ENCODE measurements at regions of chr4 and their contacts with region 1.

Region 1: DNA sequence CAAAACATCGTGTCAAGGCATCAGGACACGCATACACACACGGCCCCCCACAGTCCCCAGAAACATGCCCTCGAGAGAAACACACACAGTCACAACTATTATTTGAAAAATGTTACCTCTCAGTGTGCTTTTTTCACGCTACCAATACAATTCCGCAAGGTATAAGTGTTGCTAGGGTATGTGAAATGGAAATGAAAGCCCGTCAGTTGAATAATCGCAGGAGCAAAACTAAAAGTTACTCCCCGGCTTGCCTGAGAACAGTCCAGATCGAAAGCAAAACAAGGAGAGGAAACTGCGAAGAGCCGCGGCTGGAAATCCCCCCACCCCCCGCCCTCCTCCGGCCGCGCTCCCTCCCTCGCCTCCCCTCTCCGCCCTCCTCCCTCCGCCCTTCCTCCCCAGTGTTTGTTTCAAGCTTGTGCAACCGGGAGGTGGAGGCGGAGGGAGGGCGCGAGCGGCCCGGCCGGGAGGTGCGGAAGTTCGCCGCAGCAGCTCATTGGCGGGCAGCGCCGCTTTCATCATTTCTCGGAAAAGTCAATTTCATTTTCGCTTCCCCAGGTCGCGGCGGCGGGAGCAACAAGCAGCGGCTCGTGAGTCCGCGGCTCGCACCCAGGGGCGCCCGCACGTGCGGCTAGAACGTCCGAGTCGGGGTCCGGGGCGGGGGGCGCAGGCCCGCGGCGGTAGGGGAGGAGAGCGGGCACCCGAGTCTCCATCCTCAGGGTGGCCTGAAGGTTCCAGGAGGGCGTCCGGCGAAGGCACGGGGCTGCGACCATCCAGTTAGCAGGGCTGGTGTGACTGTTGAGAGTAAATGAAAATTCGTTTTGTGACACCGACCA is at the start of gene IRF2:
- DNase-seq: peak; percentile 99
- H3K4me3 ChIP-seq: peak within 1 kb of the TSS; percentile 91
- H3K27ac ChIP-seq: peak within 1 kb of the TSS; percentile 91
- H3K4me1 ChIP-seq: peaks cover 8% of the 10 kb centered on the region
- H3K27me3 ChIP-seq: no peaks in the 10 kb centered on the region
- CTCF ChIP-seq: no peak
- total RNA-seq, gene IRF2: 27.5 and 28.2 TPM in 2 replicates

Region 2: GRCh38 chr4:184369871-184370270 is 104.6 kb before region 1 on chr4:
- CTCF ChIA-PET with region 1: no interaction called
- POLR2A ChIA-PET with region 1: interaction called, 11 read pairs
- intact Hi-C with region 1: loop called (anchors 1 kb)
- DNase-seq: peak; percentile 99
- H3K4me3 ChIP-seq: no peak overlapping the region
- H3K27ac ChIP-seq: peak overlapping the region; percentile 99
- H3K4me1 ChIP-seq: peaks cover 60% of the 10 kb centered on the region
- H3K27me3 ChIP-seq: no peaks in the 10 kb centered on the region
- CTCF ChIP-seq: no peak

Region 3: DNA sequence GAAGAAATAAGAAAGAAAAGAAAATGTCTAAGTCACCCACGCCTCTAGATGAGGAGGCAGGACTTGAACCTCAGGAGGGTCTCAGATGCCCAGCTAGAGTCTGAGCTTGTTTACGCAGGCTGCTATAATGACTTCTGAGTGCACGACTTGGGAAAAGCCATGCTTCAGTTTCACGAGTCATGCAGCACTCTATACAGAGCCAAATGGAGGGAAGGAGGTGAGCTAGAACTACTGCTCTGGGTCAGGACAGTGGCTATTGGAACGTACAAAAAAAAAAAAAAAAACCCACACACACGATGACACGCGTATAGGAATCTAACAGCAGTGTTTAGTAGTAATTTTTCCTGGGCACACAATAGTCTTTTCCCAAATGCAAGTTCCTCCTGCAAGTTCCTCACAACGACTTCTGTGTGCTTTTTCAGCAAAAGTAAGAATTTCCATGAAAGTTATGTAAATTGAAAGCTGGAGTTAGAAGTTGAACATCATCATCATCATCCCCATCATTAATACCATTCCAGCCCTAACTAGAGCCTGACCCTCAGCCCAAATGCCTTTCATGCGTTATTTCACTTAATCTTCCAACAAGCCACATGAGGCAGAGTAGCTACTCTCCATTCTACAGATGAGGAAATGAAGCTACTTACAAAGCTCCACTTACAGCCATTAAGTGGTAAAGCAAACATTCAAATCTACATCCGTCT is 36.8 kb before region 1 on chr4:
- CTCF ChIA-PET with region 1: no interaction called
- POLR2A ChIA-PET with region 1: interaction called, 15 read pairs
- intact Hi-C with region 1: no loop called
- DNase-seq: peak; percentile 35
- H3K4me3 ChIP-seq: no peak overlapping the region
- H3K27ac ChIP-seq: no peak overlapping the region
- H3K4me1 ChIP-seq: peaks cover 26% of the 10 kb centered on the region
- H3K27me3 ChIP-seq: no peaks in the 10 kb centered on the region
- CTCF ChIP-seq: no peak

Region 4: DNA sequence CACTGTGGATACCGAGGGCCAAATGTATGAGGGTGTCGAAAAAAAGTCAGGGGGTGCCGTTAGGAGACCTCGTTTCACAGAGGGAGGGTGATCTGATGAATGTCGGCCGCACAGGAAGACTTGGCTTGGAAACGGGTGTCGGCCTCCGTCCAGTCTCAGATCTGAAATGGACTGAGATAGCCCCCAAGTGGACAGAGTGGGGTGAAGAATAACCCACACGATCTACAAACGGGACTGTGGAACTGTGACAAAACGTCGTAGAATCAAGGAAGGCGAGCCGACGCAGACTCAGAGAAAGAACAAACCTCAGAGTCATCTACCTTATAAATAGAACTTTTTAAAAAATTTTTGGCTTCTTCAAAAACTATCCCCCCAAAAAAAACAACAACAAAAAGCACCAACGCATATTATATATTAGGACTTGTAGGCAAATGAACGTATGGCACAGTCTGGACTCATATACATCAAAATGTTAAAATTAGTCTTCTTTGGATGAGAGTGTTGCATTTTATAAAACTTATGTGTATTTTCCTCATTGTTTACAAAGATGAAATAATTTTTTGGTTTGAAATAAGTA is 63.6 kb after region 1 on chr4:
- CTCF ChIA-PET with region 1: no interaction called
- POLR2A ChIA-PET with region 1: no interaction called
- intact Hi-C with region 1: loop called (anchors 2 kb)
- DNase-seq: peak; percentile 90
- H3K4me3 ChIP-seq: peak overlapping the region; percentile 78
- H3K27ac ChIP-seq: peak overlapping the region; percentile 92
- H3K4me1 ChIP-seq: peaks cover 20% of the 10 kb centered on the region
- H3K27me3 ChIP-seq: no peaks in the 10 kb centered on the region
- CTCF ChIP-seq: peak; percentile 65

Measured in A673 (cell line).